Heart right ventricle (tissue), 16 donors: ENCODE measurements at regions of chr3 and their contacts with region 1.

Region 1: GRCh38 chr3:42780892-42781700 is 8.0 kb upstream of the CCDC13 start:
- DNase-seq: peak in 1 of 2 donors; percentile 22
- ATAC-seq: peak; percentile 51 to 82 (median 72)
- H3K4me3 ChIP-seq: no peak overlapping the region
- H3K27ac ChIP-seq: no peak overlapping the region
- H3K4me1 ChIP-seq: peaks cover 0 to 19% (median 1%) of the 10 kb centered on the region in 9 donors
- H3K27me3 ChIP-seq: no peaks in the 10 kb centered on the region
- CTCF ChIP-seq: peak; percentile 66 to 84 (median 77)

Region 2: GRCh38 chr3:42814914-42815507 is 33.9 kb after region 1 on chr3:
- intact Hi-C with region 1: no loop called
- DNase-seq: no peak
- ATAC-seq: peak; percentile 23 to 87 (median 74)
- H3K4me3 ChIP-seq: no peak overlapping the region
- H3K27ac ChIP-seq: peak overlapping the region in 3 of 10 donors; percentile 2 to 37 (median 8)
- H3K4me1 ChIP-seq: peaks cover 0 to 30% (median 11%) of the 10 kb centered on the region in 9 donors
- H3K27me3 ChIP-seq: no peaks in the 10 kb centered on the region
- CTCF ChIP-seq: no peak

Region 3: GRCh38 chr3:42831321-42831713 is 50.2 kb after region 1 on chr3:
- intact Hi-C with region 1: loop called in 9 of 10 experiments (anchors 5 to 10 kb)
- DNase-seq: peak; percentile 48 to 74
- ATAC-seq: peak; percentile 25 to 76 (median 66)
- H3K4me3 ChIP-seq: no peak overlapping the region
- H3K27ac ChIP-seq: no peak overlapping the region
- H3K4me1 ChIP-seq: peaks cover 0 to 6% (median 0%) of the 10 kb centered on the region in 9 donors
- H3K27me3 ChIP-seq: no peaks in the 10 kb centered on the region
- CTCF ChIP-seq: peak; percentile 44 to 80 (median 73)

Region 4: DNA sequence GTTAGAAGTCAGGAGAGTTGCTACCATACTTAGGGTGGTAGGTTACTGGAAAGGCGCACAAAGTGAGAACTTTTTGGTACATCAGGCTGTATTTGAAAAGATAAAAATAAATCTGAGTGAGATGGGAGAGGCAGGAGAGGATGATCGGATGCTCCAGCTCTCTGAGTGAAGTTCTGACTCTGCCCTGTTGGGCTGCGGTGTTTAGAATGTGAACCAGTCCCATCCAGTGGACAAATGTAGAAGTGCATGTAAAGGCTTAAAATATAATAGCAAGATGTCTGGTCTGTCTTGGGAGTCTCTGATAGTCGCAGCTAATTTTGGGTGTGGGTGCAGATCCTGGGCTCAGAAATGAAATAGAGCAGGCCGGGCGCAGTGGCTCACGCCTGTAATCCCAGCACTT is 58.5 kb after region 1 on chr3:
- intact Hi-C with region 1: loop called (anchors 2 to 10 kb)
- DNase-seq: peak in 1 of 2 donors; percentile 53
- ATAC-seq: peak; percentile 74 to 88 (median 80)
- H3K4me3 ChIP-seq: peak overlapping the region in 3 of 10 donors; percentile 8 to 19 (median 17)
- H3K27ac ChIP-seq: no peak overlapping the region
- H3K4me1 ChIP-seq: peaks cover 0 to 26% (median 11%) of the 10 kb centered on the region in 9 donors
- H3K27me3 ChIP-seq: no peaks in the 10 kb centered on the region
- CTCF ChIP-seq: peak; percentile 50 to 81 (median 71)

Region 5: DNA sequence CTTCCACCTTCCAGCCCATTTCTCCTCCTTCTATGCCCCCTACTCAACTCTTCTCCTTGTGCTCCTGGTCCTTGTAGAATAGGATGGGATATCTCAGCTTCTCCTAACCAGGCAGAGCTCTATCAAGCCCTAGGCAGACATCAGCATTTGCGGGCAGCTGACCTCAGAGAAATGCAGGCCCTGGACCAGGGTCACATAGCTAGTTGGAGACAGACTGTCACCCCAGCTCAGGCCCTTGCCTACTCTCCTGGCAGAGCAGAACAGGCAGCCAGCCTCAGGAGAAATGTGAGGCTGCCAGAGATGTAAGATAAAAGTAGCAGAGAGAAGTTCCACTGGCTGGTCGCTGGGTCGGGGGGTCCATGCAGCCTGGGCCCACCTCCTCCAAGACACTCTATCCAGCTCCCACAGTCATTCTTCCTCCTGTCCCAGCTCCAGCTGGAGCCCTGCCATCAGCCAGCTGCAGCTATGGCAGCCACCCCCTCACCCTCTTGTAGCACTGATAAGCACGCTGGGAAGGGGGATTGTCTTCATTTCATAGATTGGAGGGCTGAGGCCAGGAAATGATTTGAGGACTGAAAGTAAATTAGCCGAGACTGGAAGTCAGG is 90.6 kb after region 1 on chr3:
- intact Hi-C with region 1: loop called in 1 of 10 experiments (anchors 5 kb)
- DNase-seq: peak; percentile 41 to 51
- ATAC-seq: peak in 7 of 8 donors; percentile 43 to 83 (median 64)
- H3K4me3 ChIP-seq: no peak overlapping the region
- H3K27ac ChIP-seq: peak overlapping the region in 5 of 10 donors; percentile 5 to 64 (median 47)
- H3K4me1 ChIP-seq: peaks cover 0 to 20% (median 11%) of the 10 kb centered on the region in 9 donors
- H3K27me3 ChIP-seq: no peaks in the 10 kb centered on the region
- CTCF ChIP-seq: no peak

Region 6: GRCh38 chr3:42880601-42881451 is 99.7 kb after region 1 on chr3:
- intact Hi-C with region 1: loop called (anchors 1 to 5 kb)
- DNase-seq: peak; percentile 82 to 86
- ATAC-seq: peak; percentile 96 to 99 (median 98)
- H3K4me3 ChIP-seq: peak overlapping the region; percentile 39 to 82 (median 70)
- H3K27ac ChIP-seq: peak overlapping the region in 9 of 10 donors; percentile 24 to 80 (median 67)
- H3K4me1 ChIP-seq: peaks cover 0 to 13% (median 8%) of the 10 kb centered on the region in 9 donors
- H3K27me3 ChIP-seq: peaks cover 0 to 7% (median 0%) of the 10 kb centered on the region in 7 donors
- CTCF ChIP-seq: peak; percentile 84 to 98 (median 93)